Activated naive CD8-positive, alpha-beta T cell treated with anti-CD3 and anti-CD28 coated beads, Interleukin-2, amount 10 ng/mL, durations not matched to agents 7 days and 5 days (primary cell): ENCODE measurements at regions of chr9 and their contacts with region 1.

Region 1: GRCh38 chr9:34126207-34127034 is at the start of gene DCAF12:
- DNase-seq: peak; percentile 91
- ATAC-seq: peak; percentile 93
- H3K4me3 Mint-ChIP-seq: peak within 1 kb of the TSS; percentile 99
- H3K27ac Mint-ChIP-seq: peak within 1 kb of the TSS; percentile 95
- H3K4me1 Mint-ChIP-seq: peaks cover 32% of the 10 kb centered on the region
- H3K27me3 Mint-ChIP-seq: no peaks in the 10 kb centered on the region
- total RNA-seq, gene DCAF12: 35.8 to 41.6 TPM

Region 2: DNA sequence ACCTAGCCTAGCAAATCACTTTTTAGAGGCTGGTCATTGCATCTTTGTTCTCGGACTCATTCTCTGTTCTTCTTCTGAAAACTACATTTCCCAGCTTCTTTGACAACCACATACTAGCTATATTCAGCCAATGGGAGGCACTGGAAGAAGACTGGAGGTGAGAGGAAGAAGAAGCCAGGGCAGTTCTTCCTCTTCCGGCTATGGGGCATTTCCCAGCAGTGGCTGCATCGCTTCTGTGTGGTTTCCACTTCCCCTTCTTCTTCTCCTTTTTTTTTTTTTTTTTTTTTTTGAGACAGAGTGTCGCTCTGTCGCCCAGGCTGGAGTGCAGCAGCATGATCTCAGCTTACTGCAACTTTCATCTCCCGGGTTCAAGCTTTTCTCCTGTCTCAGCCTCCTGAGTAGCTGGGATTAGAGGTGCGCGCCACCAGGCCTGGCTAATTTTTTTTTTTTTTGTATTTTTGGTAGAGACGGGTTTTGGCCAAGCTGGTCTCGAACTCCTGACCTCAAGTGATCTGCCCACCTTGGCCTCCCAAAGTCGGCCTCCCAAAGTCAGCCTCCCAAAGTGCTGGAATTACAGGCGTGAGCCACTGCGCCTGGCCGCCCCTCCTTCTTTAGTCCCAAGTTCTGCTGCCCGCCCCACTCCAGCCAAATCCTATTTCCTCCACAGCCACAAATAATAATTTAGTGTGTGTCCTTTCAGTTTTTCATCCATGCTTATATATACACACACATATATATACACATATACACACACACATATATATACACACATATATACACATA is 45.5 kb after region 1 on chr9:
- POLR2A ChIA-PET with region 1: interaction called, 16 read pairs
- DNase-seq: no peak
- ATAC-seq: peak; percentile 98
- H3K4me3 Mint-ChIP-seq: peak overlapping the region; percentile 62
- H3K27ac Mint-ChIP-seq: peak overlapping the region; percentile 79
- H3K4me1 Mint-ChIP-seq: peaks cover 12% of the 10 kb centered on the region
- H3K27me3 Mint-ChIP-seq: no peaks in the 10 kb centered on the region